IMR-90 (cell line): ENCODE measurements at regions of chr1 and their contacts with region 1.

Region 1: GRCh38 chr1:213244664-213245091 is 193.6 kb downstream of the RPS6KC1 start:
- DNase-seq: peak; percentile 65
- ATAC-seq: peak; percentile 63
- H3K4me3 ChIP-seq: no peak overlapping the region
- H3K27ac ChIP-seq: no peak overlapping the region
- H3K4me1 ChIP-seq: peaks cover 1% of the 10 kb centered on the region; the same call in 1 of the 2 replicates
- H3K27me3 ChIP-seq: no peaks in the 10 kb centered on the region
- CTCF ChIP-seq: peak; percentile 79
- POLR2A ChIP-seq: no peak
- RAD21 ChIP-seq: peak; percentile 72

Region 2: GRCh38 chr1:212699104-212699624 is 545.5 kb before region 1 on chr1:
- CTCF ChIA-PET with region 1: no interaction called
- POLR2A ChIA-PET with region 1: no interaction called
- dilution Hi-C with region 1: no loop called
- in situ Hi-C with region 1: no loop called
- intact Hi-C with region 1: no loop called
- DNase-seq: peak; percentile 32
- ATAC-seq: peak; percentile 71
- H3K4me3 ChIP-seq: peak overlapping the region; percentile 73
- H3K27ac ChIP-seq: peak overlapping the region; percentile 15; the same call in 1 of the 2 replicates
- H3K4me1 ChIP-seq: peaks cover 3% of the 10 kb centered on the region; the same call in 1 of the 2 replicates
- H3K27me3 ChIP-seq: no peaks in the 10 kb centered on the region
- CTCF ChIP-seq: peak; percentile 65
- POLR2A ChIP-seq: no peak
- RAD21 ChIP-seq: peak; percentile 52

Region 3: GRCh38 chr1:212743901-212744475 is 500.7 kb before region 1 on chr1:
- CTCF ChIA-PET with region 1: no interaction called
- POLR2A ChIA-PET with region 1: no interaction called
- dilution Hi-C with region 1: no loop called
- in situ Hi-C with region 1: no loop called
- intact Hi-C with region 1: no loop called
- DNase-seq: no peak
- ATAC-seq: no peak
- H3K4me3 ChIP-seq: no peak overlapping the region
- H3K27ac ChIP-seq: no peak overlapping the region
- H3K4me1 ChIP-seq: peaks cover 1% of the 10 kb centered on the region; the same call in 1 of the 2 replicates
- H3K27me3 ChIP-seq: no peaks in the 10 kb centered on the region
- CTCF ChIP-seq: no peak
- POLR2A ChIP-seq: no peak
- RAD21 ChIP-seq: no peak

Region 4: GRCh38 chr1:213374369-213374768 is 129.7 kb after region 1 on chr1:
- CTCF ChIA-PET with region 1: no interaction called
- POLR2A ChIA-PET with region 1: no interaction called
- dilution Hi-C with region 1: no loop called
- in situ Hi-C with region 1: no loop called
- intact Hi-C with region 1: loop called (anchors 1 kb)
- DNase-seq: peak; percentile 32
- ATAC-seq: peak; percentile 92
- H3K4me3 ChIP-seq: no peak overlapping the region
- H3K27ac ChIP-seq: no peak overlapping the region
- H3K4me1 ChIP-seq: no peaks in the 10 kb centered on the region
- H3K27me3 ChIP-seq: no peaks in the 10 kb centered on the region
- CTCF ChIP-seq: peak; percentile 78
- POLR2A ChIP-seq: no peak
- RAD21 ChIP-seq: peak; percentile 58

Region 5: DNA sequence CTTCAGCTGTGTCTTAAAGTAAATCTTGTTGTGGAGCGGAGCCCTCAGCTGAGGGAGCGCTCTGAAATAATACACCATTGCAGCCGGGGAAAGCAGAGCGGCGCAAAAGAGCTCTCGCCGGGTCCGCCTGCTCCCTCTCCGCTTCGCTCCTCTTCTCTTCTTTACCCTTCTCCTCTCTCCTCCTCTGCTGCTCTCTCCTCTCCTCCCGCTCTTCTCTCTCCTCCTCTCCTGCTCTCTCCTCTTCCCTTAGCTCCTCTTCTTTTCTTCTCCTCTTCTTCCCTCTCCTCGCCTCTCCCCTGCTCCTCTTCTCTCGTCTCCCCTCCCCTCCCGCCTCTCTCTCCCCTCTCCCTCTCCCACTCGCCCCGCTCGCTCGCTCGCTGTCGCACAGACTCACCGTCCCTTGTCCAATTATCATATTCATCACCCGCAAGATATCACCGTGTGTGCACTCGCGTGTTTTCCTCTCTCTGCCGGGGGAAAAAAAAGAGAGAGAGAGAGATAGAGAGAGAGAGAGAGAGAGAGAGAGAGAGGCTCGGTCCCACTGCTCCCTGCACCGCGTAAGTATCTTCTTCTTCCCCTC is 743.3 kb after region 1 on chr1 and contains the start of gene PROX1:
- CTCF ChIA-PET with region 1: no interaction called
- POLR2A ChIA-PET with region 1: no interaction called
- dilution Hi-C with region 1: no loop called
- in situ Hi-C with region 1: no loop called
- intact Hi-C with region 1: loop called (anchors 5 kb)
- DNase-seq: peak; percentile 87
- ATAC-seq: peak; percentile 97
- H3K4me3 ChIP-seq: peak within 1 kb of the TSS; percentile 51
- H3K27ac ChIP-seq: no peak within 1 kb of the TSS
- H3K4me1 ChIP-seq: peaks cover 3% of the 10 kb centered on the region; the same call in 1 of the 2 replicates
- H3K27me3 ChIP-seq: peaks cover 54% of the 10 kb centered on the region
- CTCF ChIP-seq: 0 out of 2 replicates have a peak, but pooled peaks have one; percentile 11
- POLR2A ChIP-seq: no peak
- RAD21 ChIP-seq: no peak
- total RNA-seq, gene PROX1: under 0.01 and 0.28 TPM in 2 replicates

Region 6: DNA sequence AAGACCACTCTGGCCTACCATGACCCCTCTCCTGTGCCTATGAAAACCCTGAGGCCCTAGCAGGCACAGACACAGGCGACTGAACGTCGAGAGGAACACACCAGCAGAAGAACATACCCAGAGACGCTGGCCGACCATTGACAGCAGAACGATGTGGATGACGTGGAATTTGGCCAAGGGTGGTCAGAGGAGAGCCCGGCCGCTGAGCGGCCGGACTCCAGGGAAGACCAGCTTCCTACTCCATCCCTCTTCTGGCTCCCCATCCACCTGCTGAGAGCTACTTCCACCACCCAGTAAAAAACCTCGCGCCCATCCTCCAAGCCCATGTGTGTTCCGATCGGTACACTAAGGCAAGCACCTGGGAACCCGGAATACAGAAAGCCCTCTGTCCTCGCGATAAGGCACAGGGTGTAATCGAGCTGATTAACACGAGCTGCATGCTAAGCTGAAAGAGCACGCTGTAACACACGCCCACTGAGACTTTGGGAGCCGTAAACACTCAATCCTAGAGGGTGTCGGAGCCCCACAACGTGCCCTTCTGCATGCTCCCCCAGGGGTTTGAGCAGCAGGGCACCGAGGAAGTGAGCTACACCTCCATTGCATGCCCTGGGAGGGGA is 1508.7 kb after region 1 on chr1:
- CTCF ChIA-PET with region 1: no interaction called
- POLR2A ChIA-PET with region 1: no interaction called
- dilution Hi-C with region 1: no loop called
- in situ Hi-C with region 1: no loop called
- intact Hi-C with region 1: no loop called
- DNase-seq: no peak
- ATAC-seq: no peak
- H3K4me3 ChIP-seq: no peak overlapping the region
- H3K27ac ChIP-seq: no peak overlapping the region
- H3K4me1 ChIP-seq: no peaks in the 10 kb centered on the region
- H3K27me3 ChIP-seq: no peaks in the 10 kb centered on the region
- CTCF ChIP-seq: no peak
- POLR2A ChIP-seq: no peak
- RAD21 ChIP-seq: no peak